Mammary epithelial cell (primary cell): ENCODE measurements at regions of chr10 and their contacts with region 1.

Region 1: DNA sequence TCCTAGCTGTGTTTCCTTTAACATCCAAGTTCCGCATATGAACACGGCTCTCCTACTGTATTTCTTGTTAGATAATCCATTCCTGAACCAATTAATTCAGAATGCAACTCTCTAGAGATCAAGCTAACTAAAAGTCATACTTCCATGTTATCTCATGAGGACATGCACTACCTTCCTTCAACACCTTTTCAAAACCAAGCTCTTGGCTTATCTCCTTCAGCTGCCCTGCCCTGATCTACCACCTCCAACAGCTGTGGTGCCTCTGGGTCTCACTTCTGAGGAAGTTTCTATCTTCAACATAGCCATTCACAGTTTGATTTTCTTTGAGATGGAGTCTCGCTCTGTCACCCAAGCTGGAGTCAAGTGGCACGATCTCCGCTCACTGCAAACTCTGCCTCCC is 109.5 kb downstream of the IDE start:
- DNase-seq: no peak
- H3K4me3 ChIP-seq: no peak overlapping the region
- H3K27ac ChIP-seq: no peak overlapping the region
- H3K4me1 ChIP-seq: no peaks in the 10 kb centered on the region
- H3K27me3 ChIP-seq: no peaks in the 10 kb centered on the region
- CTCF ChIP-seq: no peak

Region 2: DNA sequence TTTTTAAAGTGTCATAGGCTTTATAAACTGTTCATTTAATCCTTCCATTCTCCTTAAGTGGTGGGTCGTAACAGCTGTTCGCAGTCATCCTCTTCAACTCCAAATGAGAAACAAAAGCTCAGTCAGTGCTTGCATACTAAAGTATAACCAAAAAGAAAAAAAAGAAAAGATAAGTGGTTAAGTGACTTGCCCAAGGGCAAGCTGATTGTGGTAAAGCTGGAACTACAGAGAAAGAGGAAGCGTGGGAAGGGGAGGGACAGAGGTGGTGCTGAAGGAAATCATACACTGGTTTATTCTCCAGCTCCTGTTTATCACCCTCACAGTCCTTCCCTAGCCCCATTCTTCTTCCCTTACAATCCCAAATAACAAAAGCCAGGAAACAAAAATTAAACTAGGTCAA is 79.9 kb after region 1 on chr10:
- CTCF ChIA-PET with region 1: no interaction called
- dilution Hi-C with region 1: loop called (anchors 10 kb)
- in situ Hi-C with region 1: no loop called
- intact Hi-C with region 1: no loop called
- DNase-seq: peak; percentile 75
- H3K4me3 ChIP-seq: no peak overlapping the region
- H3K27ac ChIP-seq: no peak overlapping the region
- H3K4me1 ChIP-seq: peaks cover 11% of the 10 kb centered on the region
- H3K27me3 ChIP-seq: no peaks in the 10 kb centered on the region
- CTCF ChIP-seq: no peak

Region 3: DNA sequence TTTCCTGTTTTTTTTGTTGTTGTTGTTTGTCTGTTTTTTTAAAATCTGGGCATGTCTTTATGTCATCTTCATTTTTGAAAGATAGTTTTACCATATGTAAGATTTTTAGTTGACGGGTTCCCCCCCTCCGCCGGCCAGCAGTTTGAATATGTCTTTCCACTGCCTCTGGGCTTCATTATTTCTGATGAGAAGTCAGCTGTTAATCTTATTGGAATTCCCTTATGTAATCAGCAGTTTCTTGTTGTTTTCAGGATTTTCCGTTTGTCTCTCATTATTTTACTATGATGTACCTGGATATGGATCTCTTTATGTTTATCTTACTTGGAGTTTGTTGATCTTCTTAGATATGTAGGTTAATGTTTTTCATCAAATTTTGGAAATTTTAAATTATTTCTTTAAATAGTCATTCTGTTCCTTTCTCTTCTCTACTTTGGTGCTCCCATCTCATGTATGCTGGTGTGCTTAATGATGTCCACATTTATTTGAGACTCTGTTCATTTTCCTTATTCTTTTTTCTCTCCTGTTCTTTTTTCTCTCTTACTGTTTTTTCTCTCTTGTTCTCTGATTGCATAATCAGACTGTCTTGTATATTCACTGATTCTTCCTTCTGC is 393.6 kb after region 1 on chr10:
- CTCF ChIA-PET with region 1: no interaction called
- dilution Hi-C with region 1: no loop called
- in situ Hi-C with region 1: no loop called
- intact Hi-C with region 1: no loop called
- DNase-seq: no peak
- H3K4me3 ChIP-seq: no peak overlapping the region
- H3K27ac ChIP-seq: no peak overlapping the region
- H3K4me1 ChIP-seq: no peaks in the 10 kb centered on the region
- H3K27me3 ChIP-seq: no peaks in the 10 kb centered on the region
- CTCF ChIP-seq: no peak